ENCODE measurements at regions of chr6 and their contacts with region 1.

Region 1: DNA sequence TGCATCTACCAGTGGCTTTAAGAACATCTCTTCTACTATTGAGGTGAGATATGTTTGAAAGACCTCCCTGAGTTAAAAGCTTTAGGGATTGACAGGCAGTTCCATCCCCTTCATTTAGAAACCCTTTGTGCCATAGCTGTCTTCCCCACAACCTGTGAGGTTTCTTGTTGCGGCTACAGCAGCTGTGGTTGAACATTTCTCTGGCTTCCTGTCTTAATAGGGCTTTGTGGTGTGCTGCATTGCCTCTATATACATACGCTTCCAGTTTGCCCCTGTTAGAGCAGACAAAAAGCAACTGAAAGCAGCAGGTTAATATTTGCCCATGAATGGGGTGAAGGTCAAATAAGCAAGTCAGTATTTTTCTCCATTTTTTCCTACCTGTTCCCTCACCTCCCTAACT is 210.2 kb downstream of the TMEM200A start:
- DNase-seq: peak; percentile 86
- H3K4me3 Mint-ChIP-seq: peak overlapping the region; percentile 31
- H3K27ac Mint-ChIP-seq: peak overlapping the region; percentile 82
- H3K4me1 Mint-ChIP-seq: peaks cover 40% of the 10 kb centered on the region
- H3K27me3 Mint-ChIP-seq: no peaks in the 10 kb centered on the region

Region 2: DNA sequence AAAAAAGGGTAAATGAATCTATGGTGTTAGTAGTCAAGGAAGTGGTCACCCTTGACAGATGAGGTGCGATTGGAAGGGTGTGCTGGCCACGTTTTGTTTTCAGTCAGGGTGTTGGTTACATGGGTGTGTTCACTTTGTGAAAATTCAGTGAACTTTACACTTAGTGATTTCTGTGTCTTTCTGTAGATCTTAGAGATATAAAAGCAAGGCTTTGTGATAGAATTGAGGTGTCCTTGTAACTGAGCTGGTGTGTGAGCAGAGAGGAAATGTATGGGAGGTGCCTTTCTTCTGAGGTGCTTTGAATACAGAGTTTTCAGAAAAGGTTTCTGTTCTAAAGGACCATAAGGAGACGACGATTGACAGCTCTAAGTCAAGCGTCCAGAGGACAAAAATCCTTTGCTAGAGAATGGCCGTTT is 443.7 kb before region 1 on chr6:
- CTCF ChIA-PET with region 1: no interaction called
- POLR2A ChIA-PET with region 1: no interaction called
- DNase-seq: peak; percentile 86
- H3K4me3 Mint-ChIP-seq: peak overlapping the region; percentile 54
- H3K27ac Mint-ChIP-seq: peak overlapping the region; percentile 90
- H3K4me1 Mint-ChIP-seq: peaks cover 67% of the 10 kb centered on the region
- H3K27me3 Mint-ChIP-seq: no peaks in the 10 kb centered on the region

Region 3: DNA sequence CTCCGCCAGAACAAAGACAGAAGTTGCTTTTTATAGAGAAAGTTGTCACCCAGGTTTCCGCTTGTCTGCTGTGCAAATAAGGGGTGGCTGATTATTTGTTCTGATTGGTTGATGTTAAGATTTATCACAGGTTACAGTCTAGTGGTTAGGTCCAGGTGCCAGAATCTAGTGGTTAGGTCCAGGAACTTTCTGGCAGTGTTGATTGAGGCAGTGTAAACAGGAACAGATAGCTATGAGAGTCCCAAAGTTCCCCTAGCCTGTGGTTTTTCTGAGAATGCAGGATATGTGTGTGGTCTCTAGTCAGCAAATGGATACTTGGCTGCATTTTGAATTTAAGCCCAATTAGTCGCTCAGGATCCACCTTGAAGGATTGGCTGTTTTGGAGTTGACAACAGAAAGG is 62.2 kb before region 1 on chr6:
- CTCF ChIA-PET with region 1: interaction called, 3 read pairs
- POLR2A ChIA-PET with region 1: interaction called, 39 read pairs
- DNase-seq: peak; percentile 78
- H3K4me3 Mint-ChIP-seq: peak overlapping the region; percentile 40
- H3K27ac Mint-ChIP-seq: peak overlapping the region; percentile 87
- H3K4me1 Mint-ChIP-seq: peaks cover 57% of the 10 kb centered on the region
- H3K27me3 Mint-ChIP-seq: no peaks in the 10 kb centered on the region

Region 4: DNA sequence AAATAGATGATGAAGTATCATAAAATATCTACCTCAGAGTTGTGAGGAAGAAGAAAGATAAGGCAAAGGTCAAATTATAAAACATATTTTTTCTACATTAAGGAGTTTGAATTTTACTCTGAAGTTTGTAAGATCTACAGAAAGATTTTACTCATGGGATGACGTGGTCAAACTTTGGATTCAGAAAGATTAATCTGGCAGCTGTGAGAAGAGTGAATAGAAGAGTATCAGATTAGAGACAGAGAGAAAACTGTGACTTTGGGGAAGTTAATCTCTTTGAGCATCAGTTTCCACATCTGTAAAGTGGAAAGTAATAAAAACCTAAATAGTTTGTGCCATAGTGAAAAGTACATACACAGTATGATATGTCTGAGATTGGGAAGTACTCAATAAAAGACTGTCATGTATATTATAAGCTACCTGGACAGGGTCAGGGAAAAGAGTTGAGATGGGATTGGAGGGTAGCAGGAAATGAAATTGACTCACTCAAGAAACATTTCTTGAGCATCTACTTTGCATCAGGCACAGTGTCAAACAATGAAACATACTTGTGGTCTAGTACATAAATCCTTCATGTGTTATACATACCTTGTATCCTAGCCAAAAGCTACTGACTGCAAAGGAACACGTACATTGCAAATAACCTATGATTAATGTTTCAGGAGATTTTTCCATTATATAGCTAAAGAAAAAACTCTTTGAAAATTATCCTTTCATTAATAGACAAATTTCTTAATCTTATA is 12.0 kb after region 1 on chr6:
- CTCF ChIA-PET with region 1: interaction called, 4 read pairs
- POLR2A ChIA-PET with region 1: interaction called, 17 read pairs
- DNase-seq: no peak
- H3K4me3 Mint-ChIP-seq: no peak overlapping the region
- H3K27ac Mint-ChIP-seq: no peak overlapping the region
- H3K4me1 Mint-ChIP-seq: peaks cover 7% of the 10 kb centered on the region
- H3K27me3 Mint-ChIP-seq: no peaks in the 10 kb centered on the region

Region 5: DNA sequence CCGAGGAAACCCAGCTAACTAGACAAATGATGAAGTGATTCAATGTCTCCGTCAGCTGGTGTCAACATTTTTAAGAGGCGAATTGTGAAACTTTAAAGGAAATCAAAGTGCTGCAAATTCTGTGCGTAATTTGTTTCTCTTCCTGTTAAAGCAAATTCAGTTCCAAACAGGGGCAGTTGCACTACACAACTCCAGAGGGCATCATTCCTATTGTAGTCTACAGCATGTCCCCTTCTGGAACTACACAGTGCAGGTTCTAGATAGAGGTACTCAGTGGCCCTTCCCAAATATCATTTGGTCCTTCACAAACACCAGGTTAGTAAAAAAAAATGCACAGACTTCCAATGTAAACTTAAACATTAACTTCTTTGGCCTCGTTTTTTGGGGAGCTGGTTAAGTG is 213.0 kb after region 1 on chr6:
- CTCF ChIA-PET with region 1: no interaction called
- POLR2A ChIA-PET with region 1: no interaction called
- DNase-seq: no peak
- H3K4me3 Mint-ChIP-seq: no peak overlapping the region
- H3K27ac Mint-ChIP-seq: no peak overlapping the region
- H3K4me1 Mint-ChIP-seq: no peaks in the 10 kb centered on the region
- H3K27me3 Mint-ChIP-seq: no peaks in the 10 kb centered on the region